ENCODE measurements at regions of chr7 and their contacts with region 1.

Region 1: GRCh38 chr7:142060936-142061335 is 50.6 kb upstream of the MGAM2 start:
- DNase-seq: no peak
- H3K4me3 ChIP-seq: no peak overlapping the region
- H3K27ac ChIP-seq: no peak overlapping the region
- H3K4me1 ChIP-seq: no peaks in the 10 kb centered on the region
- H3K27me3 ChIP-seq: no peaks in the 10 kb centered on the region
- CTCF ChIP-seq: no peak

Region 2: DNA sequence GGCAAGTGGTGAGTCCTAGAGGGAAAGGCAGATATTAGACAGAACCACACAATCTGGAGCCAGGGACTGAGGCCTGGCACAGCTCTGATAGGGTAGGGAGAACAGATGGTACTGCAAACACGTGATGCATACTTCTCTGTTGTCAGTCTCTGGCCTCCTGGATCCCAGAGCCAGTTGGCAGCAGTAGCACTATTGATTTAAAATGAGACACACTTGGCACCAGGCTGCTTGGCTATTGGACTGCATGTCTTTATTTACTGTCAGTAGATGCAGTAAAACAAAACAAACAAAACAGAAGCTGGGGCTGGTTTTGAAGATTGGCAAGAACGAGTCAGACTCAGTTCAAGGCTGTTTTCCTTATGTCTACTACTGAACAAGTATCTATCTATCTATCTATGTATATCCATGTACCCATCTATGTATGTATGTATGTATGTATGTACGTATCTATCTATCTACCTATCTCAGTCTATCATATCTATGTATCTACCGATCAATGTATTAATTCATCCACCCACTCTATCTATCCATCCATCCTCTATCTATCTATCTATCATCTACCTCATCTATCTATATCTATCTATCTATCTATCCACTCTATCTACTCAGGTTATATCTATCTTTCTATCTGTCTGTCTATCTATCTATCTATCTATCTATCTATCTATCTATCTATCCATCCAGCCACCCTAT is 27.2 kb after region 1 on chr7:
- intact Hi-C with region 1: loop called (anchors 1 kb)
- DNase-seq: no peak
- H3K4me3 ChIP-seq: no peak overlapping the region
- H3K27ac ChIP-seq: no peak overlapping the region
- H3K4me1 ChIP-seq: no peaks in the 10 kb centered on the region
- H3K27me3 ChIP-seq: no peaks in the 10 kb centered on the region
- CTCF ChIP-seq: no peak

Measured in ascending aorta (tissue), 2 donors.